Aorta (tissue), 5 donors: ENCODE measurements at regions of chr1 and their contacts with region 1.

Region 1: DNA sequence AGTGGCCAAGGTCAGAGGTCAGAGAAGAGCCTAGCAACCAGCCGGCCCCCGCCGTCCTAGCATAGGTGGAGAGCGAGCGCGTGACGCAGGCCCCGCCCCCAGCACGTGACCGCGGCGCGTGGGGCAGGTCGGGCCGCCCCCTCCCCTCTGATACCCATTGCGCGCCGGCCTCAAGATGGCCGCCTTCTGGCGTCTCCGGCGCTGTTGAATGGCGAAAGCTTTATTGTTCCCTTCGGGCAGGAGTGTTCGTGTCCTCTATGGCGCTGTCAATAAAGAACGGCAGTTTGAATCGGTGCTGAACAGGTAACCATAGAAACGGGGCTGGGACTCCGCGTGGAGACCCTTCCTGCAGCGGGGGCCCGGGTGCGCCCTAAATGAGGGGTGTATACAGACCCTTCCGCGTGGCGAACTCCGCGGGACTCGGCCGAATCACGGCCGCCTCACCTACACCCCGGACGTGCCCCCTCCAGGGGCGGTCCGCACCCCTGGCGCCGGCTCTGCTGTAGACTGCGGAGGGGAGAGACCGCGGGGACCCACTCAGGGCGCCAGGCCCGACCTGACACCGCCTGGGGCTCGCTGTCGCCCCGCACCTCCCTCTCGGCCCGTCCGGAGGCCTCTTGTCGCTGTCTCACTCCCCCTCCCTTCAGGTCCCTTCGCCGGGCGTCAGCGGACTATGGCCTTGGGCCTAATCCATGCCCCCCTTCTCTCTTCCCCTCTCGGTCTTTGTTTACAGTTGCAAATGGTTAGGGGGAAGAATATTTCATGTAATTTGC is at the start of gene ZBTB40:
- DNase-seq: peak; percentile 98
- ATAC-seq: peak; percentile 98
- H3K4me3 ChIP-seq: peak within 1 kb of the TSS; percentile 94 to 97
- H3K27ac ChIP-seq: peak within 1 kb of the TSS; percentile 68 to 87
- H3K4me1 ChIP-seq: peaks cover 0 to 1% of the 10 kb centered on the region in 2 donors
- H3K27me3 ChIP-seq: no peaks in the 10 kb centered on the region
- total RNA-seq, gene ZBTB40: 21.2 to 24.9 TPM

Region 2: GRCh38 chr1:22490309-22490708 is 38.4 kb after region 1 on chr1:
- intact Hi-C with region 1: loop called in 1 of 2 experiments (anchors 10 kb)
- DNase-seq: no peak
- ATAC-seq: no peak
- H3K4me3 ChIP-seq: no peak overlapping the region
- H3K27ac ChIP-seq: no peak overlapping the region
- H3K4me1 ChIP-seq: peaks cover 0 to 3% of the 10 kb centered on the region in 2 donors
- H3K27me3 ChIP-seq: no peaks in the 10 kb centered on the region

Region 3: GRCh38 chr1:22509815-22510214 is 57.9 kb after region 1 on chr1:
- intact Hi-C with region 1: loop called in 1 of 2 experiments (anchors 2 kb)
- DNase-seq: no peak
- ATAC-seq: peak; percentile 70
- H3K4me3 ChIP-seq: peak overlapping the region; percentile 82 to 89
- H3K27ac ChIP-seq: peak overlapping the region; percentile 93 to 99
- H3K4me1 ChIP-seq: peaks cover 0 to 5% of the 10 kb centered on the region in 2 donors
- H3K27me3 ChIP-seq: no peaks in the 10 kb centered on the region

Region 4: DNA sequence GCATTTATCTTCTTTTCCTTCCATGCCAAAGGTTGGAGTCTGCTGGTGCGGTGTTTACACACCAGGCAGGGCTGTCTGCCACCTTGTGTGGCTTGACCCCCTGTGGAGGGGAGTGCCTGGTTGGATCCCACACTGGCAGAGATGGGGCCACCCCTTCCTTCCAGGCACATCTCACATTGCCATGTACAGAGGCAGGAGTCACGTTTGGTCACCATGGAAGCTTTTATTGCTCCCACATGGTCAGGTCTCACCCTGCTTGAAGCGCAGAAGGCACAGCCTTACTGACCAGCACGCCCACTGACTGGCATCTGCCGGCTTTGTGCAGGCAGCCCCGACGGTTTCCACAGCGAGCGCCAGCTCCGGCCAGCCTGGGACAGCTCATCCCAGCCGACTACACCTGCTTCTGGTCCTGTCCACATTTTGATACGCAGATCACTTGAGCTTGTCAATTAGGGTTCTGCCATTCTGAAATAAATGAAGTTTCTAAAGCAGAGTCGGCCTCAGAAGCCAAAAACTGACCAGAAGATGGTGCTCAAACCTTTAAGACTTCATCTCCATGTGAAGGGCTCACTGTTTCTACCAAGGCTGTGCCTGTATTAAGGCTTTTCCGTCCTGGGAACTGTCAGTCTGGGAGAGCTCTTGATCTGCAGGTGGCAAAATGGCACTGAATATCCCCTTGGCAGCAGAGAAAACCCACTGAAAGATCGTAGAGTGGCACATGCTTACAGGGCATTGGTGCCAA is 75.8 kb after region 1 on chr1:
- intact Hi-C with region 1: loop called (anchors 5 to 10 kb)
- DNase-seq: no peak
- ATAC-seq: no peak
- H3K4me3 ChIP-seq: no peak overlapping the region
- H3K27ac ChIP-seq: peak overlapping the region in 1 of 2 donors; percentile 39
- H3K4me1 ChIP-seq: no peaks in the 10 kb centered on the region
- H3K27me3 ChIP-seq: no peaks in the 10 kb centered on the region